ENCODE measurements at regions of chr7 and their contacts with region 1.

Region 1: GRCh38 chr7:131196803-131197202 is 130.9 kb upstream of the MKLN1 start:
- DNase-seq: no peak
- ATAC-seq: no peak
- H3K4me3 ChIP-seq: no peak overlapping the region
- H3K4me3 Mint-ChIP-seq: no peak overlapping the region
- H3K27ac ChIP-seq: no peak overlapping the region
- H3K27ac Mint-ChIP-seq: no peak overlapping the region
- H3K4me1 ChIP-seq: no peaks in the 10 kb centered on the region
- H3K4me1 Mint-ChIP-seq: no peaks in the 10 kb centered on the region
- H3K27me3 ChIP-seq: no peaks in the 10 kb centered on the region
- H3K27me3 Mint-ChIP-seq: no peaks in the 10 kb centered on the region
- CTCF ChIP-seq: no peak

Region 2: DNA sequence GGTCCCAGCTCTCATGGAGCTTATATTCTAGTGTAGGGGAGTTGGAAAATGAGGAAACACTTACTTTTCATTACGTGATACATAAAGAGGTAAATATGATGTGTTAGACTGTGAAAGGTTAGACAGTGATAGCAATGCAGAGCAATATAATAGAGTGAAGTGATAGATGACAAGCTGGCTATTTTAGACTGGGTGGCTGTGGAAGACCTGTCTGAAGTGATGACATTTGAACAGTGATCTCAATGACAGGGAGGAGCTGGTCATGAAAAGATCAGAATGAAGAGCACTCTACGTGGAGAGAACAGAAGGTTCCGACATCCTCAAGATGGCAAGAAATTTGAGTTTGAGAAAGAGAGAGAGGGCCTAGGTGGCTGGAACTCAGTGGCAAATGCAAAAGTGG is 12.0 kb after region 1 on chr7:
- CTCF ChIA-PET with region 1: interaction called, 5 read pairs
- POLR2A ChIA-PET with region 1: no interaction called
- intact Hi-C with region 1: loop called in 1 of 2 experiments (anchors 1 kb)
- DNase-seq: no peak
- ATAC-seq: no peak
- H3K4me3 ChIP-seq: no peak overlapping the region
- H3K4me3 Mint-ChIP-seq: no peak overlapping the region
- H3K27ac ChIP-seq: no peak overlapping the region
- H3K27ac Mint-ChIP-seq: no peak overlapping the region
- H3K4me1 ChIP-seq: no peaks in the 10 kb centered on the region
- H3K4me1 Mint-ChIP-seq: no peaks in the 10 kb centered on the region
- H3K27me3 ChIP-seq: no peaks in the 10 kb centered on the region
- H3K27me3 Mint-ChIP-seq: no peaks in the 10 kb centered on the region
- CTCF ChIP-seq: no peak